Mucosa of descending colon (tissue), 3 donors: ENCODE measurements at regions of chr2 and their contacts with region 1.

Region 1: DNA sequence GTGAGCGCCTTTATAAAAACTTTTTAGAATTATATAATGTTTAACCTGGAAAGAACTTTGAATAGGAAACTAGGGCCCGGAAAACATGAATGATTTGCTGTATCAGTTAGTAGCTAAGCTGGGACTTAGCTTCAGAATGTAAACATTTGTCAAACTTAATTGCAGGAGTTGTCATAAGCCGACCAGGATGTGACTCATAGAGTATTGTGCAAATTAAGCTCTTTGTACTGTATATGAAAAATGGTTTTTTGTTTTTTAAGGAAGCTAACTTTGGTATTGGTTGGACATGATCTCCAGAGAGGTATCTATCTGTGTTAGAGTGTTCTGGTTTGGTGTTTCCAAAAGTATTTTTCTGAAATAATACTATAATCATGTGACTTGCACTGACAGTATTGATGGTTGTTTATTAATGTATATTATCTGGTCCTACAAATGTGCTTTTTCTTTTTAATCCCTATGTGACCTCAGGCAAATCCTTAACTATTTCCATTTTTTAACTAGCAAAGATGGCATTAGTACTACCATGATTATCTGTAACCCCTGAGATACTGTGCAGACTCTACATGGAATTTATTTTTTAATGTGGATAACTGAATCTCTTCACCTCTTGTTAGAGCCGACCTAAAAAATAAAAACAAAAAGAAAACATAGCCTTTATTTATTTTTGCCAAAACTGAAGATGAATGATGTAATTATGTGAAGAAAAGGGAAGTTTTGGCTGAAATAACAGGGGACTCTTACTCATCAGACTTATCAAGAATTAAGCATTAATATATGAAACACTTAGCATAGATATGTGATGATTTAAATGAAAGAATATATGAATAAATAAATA is 11.7 kb downstream of the YIPF4 start:
- DNase-seq: peak in 1 of 3 donors; percentile 29
- ATAC-seq: peak; percentile 99
- H3K4me3 ChIP-seq: no peak overlapping the region
- H3K4me1 ChIP-seq: peaks cover 23% of the 10 kb centered on the region
- CTCF ChIP-seq: no peak

Region 2: GRCh38 chr2:32356735-32357644 is 67.6 kb after region 1 on chr2 and contains the start of gene BIRC6:
- intact Hi-C with region 1: loop called in 1 of 2 experiments (anchors 2 kb)
- DNase-seq: peak; percentile 96 to 99 (median 98)
- ATAC-seq: peak; percentile 94
- H3K4me3 ChIP-seq: peak within 1 kb of the TSS; percentile 99
- H3K4me1 ChIP-seq: peaks cover 29% of the 10 kb centered on the region
- CTCF ChIP-seq: no peak
- total RNA-seq, gene BIRC6: 102 to 136 (median 112) TPM

Region 3: DNA sequence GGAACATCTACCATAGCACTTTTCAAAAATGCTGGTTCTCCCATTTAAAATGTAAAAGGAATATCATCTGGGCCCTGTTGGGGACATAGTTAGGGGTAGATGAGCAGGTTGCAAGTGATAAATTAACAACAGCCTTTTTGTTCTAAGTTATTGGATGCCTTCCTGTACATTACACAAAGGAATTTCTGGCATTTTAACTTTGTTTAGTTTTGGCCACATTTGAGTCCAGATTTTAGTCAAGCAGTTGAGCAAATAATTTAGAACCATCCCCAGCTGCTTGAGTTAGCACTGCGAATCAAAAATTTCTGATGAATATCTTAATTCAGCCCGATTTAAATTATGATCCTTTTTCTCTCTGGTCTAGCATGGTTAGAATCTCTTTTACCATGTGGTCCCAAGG is 462.8 kb after region 1 on chr2:
- intact Hi-C with region 1: no loop called
- DNase-seq: no peak
- ATAC-seq: no peak
- H3K4me3 ChIP-seq: no peak overlapping the region
- H3K4me1 ChIP-seq: no peaks in the 10 kb centered on the region
- CTCF ChIP-seq: no peak